Ascending aorta (tissue), 2 donors: ENCODE measurements at regions of chr7 and their contacts with region 1.

Region 1: GRCh38 chr7:116271963-116272839 is 61.9 kb downstream of the TES start:
- DNase-seq: peak; percentile 20 to 82
- H3K4me3 ChIP-seq: peak overlapping the region in 1 of 2 donors; percentile 11
- H3K27ac ChIP-seq: peak overlapping the region; percentile 69
- H3K4me1 ChIP-seq: peaks cover 12 to 34% of the 10 kb centered on the region in 2 donors
- H3K27me3 ChIP-seq: no peaks in the 10 kb centered on the region
- CTCF ChIP-seq: no peak

Region 2: DNA sequence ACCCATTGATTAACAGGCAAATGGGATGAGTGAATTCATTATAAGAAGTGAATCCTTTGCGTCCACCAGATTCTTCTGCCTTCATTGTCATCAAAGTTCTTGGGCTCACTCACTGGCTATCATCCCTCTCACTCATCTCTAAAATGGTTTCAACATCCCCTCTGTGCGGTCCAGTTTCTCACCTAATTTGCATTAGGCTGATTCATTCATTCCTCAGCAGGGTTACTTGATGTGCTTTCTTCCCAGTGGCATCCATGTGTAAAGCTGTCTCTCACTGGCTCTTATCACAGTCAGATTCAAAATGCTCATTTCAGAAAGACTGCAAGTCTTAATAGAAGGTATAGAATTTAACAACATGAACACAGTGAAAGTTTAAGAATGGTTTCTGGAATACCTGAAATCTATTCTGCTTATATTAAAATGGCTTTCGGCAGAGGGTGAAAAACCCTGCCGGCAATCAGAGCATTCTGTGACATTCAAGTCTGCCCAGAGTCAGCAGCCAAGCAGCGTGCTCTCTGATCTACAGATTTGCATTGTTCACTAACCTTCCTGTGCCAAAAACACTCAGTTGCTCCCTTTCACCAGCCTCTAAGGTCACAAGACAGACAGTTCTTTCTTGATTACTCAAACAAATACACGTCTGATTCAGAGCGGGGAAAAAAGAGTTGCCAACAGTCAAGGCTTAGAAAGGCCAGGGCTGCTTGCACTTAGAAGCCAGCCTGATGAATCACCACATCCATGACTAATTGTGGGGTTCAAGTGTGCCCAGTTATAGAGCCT is 44.8 kb after region 1 on chr7:
- intact Hi-C with region 1: loop called (anchors 5 kb)
- DNase-seq: peak; percentile 48 to 90
- H3K4me3 ChIP-seq: peak overlapping the region in 1 of 2 donors; percentile 6
- H3K27ac ChIP-seq: peak overlapping the region; percentile 57 to 66
- H3K4me1 ChIP-seq: peaks cover 5 to 22% of the 10 kb centered on the region in 2 donors
- H3K27me3 ChIP-seq: no peaks in the 10 kb centered on the region
- CTCF ChIP-seq: no peak